BJ (cell line): ENCODE measurements at regions of chr2 and their contacts with region 1.

Region 1: DNA sequence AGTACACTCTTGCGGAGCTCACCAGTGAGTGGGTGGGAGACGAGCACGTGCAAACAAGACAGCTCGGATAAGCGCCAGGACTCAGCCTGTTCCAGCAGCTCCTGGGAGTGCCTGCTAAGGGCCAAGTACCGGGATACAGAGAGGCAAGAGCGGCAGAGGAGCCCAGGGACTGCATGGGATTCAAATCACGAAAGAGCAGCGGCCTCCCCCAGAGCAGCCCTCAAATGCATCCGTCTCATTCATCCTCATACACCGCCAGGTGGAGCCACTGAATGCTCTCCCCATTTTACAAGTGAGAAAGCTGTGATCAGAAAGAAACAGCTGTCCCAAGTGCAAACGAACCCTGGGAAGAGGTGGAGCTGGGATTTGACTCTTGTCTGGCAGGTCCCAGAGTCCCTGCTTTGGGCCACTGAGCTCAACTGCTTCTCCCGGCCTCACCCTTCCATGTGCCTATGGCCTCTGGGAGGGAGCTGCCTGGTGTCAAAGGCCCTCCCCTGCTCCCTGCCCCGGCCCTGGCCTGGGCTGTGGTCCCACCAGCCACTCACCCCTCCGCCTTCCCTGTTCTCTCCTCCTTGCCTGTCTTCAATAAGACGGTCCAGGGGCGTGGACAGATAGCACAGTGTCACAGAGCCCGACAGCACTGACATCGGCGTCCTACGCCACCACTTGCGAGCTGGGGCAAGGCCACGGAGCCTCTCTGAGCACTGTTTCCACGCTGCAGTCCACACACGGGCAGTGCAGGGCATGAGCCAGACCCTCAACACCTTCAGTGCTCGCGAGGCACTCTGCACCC is 72.8 kb upstream of the TAF1B start:
- DNase-seq: no peak
- H3K4me3 ChIP-seq: no peak overlapping the region
- H3K27me3 ChIP-seq: peaks cover 2% of the 10 kb centered on the region; the same call in 1 of the 2 replicates
- CTCF ChIP-seq: peak; percentile 78

Region 2: GRCh38 chr2:9555297-9556141 is 215.0 kb before region 1 on chr2 and contains the start of gene ADAM17:
- CTCF ChIA-PET with region 1: interaction called, 5 read pairs
- POLR2A ChIA-PET with region 1: interaction called, 10 read pairs
- DNase-seq: peak; percentile 83
- H3K4me3 ChIP-seq: peak within 1 kb of the TSS; percentile 79
- H3K27me3 ChIP-seq: no peaks in the 10 kb centered on the region
- CTCF ChIP-seq: peak; percentile 64
- polyA plus RNA-seq, gene ADAM17: 8.7 and 11.1 TPM in 2 replicates

Region 3: GRCh38 chr2:9638532-9638931 is 132.0 kb before region 1 on chr2:
- CTCF ChIA-PET with region 1: interaction called, 10 read pairs
- POLR2A ChIA-PET with region 1: no interaction called
- DNase-seq: peak; percentile 78
- H3K4me3 ChIP-seq: no peak overlapping the region
- H3K27me3 ChIP-seq: no peaks in the 10 kb centered on the region
- CTCF ChIP-seq: no peak

Region 4: GRCh38 chr2:9753276-9753600 is 17.3 kb before region 1 on chr2:
- CTCF ChIA-PET with region 1: interaction called, 53 read pairs
- POLR2A ChIA-PET with region 1: no interaction called
- DNase-seq: peak; percentile 72
- H3K4me3 ChIP-seq: no peak overlapping the region
- H3K27me3 ChIP-seq: no peaks in the 10 kb centered on the region; the same call in 1 of the 2 replicates
- CTCF ChIP-seq: no peak

Region 5: GRCh38 chr2:9789371-9789968 is 19.0 kb after region 1 on chr2:
- CTCF ChIA-PET with region 1: interaction called, 29 read pairs
- POLR2A ChIA-PET with region 1: no interaction called
- DNase-seq: no peak
- H3K4me3 ChIP-seq: no peak overlapping the region
- H3K27me3 ChIP-seq: no peaks in the 10 kb centered on the region
- CTCF ChIP-seq: no peak

Region 6: GRCh38 chr2:10043906-10044601 is 273.6 kb after region 1 on chr2:
- CTCF ChIA-PET with region 1: interaction called, 17 read pairs
- POLR2A ChIA-PET with region 1: no interaction called
- DNase-seq: peak; percentile 63
- H3K4me3 ChIP-seq: peak overlapping the region; percentile 79
- H3K27me3 ChIP-seq: no peaks in the 10 kb centered on the region
- CTCF ChIP-seq: no peak

Region 7: GRCh38 chr2:10097352-10098148 is 327.0 kb after region 1 on chr2:
- CTCF ChIA-PET with region 1: interaction called, 11 read pairs
- POLR2A ChIA-PET with region 1: no interaction called
- DNase-seq: no peak
- H3K4me3 ChIP-seq: no peak overlapping the region
- H3K27me3 ChIP-seq: no peaks in the 10 kb centered on the region
- CTCF ChIP-seq: peak; percentile 99